ENCODE measurements at regions of chr11 and their contacts with region 1.

Region 1: GRCh38 chr11:93921695-93922468 is 71.5 kb upstream of the VSTM5 start:
- DNase-seq: peak; percentile 68
- H3K4me3 ChIP-seq: no peak overlapping the region
- H3K27ac ChIP-seq: no peak overlapping the region
- H3K4me1 ChIP-seq: peaks cover 7% of the 10 kb centered on the region
- H3K27me3 ChIP-seq: no peaks in the 10 kb centered on the region
- CTCF ChIP-seq: peak; percentile 89 to 96

Region 2: DNA sequence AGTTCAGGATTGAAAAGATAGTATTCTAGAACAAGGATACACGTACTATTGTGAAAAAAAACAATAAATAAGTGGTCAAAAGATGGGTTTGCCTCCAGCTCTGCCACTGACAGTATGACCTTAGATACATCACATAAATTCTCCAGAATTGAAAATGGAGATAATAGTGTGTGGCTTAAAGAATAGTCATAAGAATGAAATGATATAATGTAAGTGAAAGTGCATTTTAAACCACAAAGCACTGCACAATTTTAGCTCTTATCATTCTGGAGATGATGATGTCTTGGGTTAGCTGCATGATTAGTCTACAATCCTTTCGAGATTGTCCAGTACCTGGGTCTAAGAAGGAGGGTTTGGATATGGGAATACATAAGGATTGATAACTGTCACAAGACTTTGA is 282.3 kb before region 1 on chr11:
- CTCF ChIA-PET with region 1: no interaction called
- dilution Hi-C with region 1: no loop called
- in situ Hi-C with region 1: no loop called
- intact Hi-C with region 1: no loop called
- DNase-seq: no peak
- H3K4me3 ChIP-seq: no peak overlapping the region
- H3K27ac ChIP-seq: no peak overlapping the region
- H3K4me1 ChIP-seq: no peaks in the 10 kb centered on the region
- H3K27me3 ChIP-seq: peaks cover 1% of the 10 kb centered on the region
- CTCF ChIP-seq: no peak

Region 3: DNA sequence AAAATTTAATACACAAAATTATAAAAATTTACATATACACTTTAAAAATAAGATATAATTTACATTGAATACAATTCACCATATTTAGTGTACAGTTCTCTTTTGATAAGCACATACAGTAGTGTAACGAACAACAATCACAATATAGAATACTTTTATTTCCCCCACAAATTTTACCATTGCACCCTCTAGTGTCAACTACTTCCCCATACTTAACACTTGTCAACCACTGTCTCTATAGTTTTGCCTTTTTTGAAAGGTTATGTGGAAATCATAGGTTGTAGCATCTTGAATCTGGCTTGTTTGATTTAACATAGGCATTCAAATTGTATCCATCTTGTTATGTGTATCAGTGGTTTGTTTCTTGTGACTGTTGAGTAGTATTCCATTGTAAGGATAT is 185.5 kb after region 1 on chr11:
- CTCF ChIA-PET with region 1: interaction called, 8 read pairs
- dilution Hi-C with region 1: no loop called
- in situ Hi-C with region 1: no loop called
- intact Hi-C with region 1: loop called (anchors 1 kb)
- DNase-seq: no peak
- H3K4me3 ChIP-seq: no peak overlapping the region
- H3K27ac ChIP-seq: no peak overlapping the region
- H3K4me1 ChIP-seq: peaks cover 14% of the 10 kb centered on the region
- H3K27me3 ChIP-seq: no peaks in the 10 kb centered on the region
- CTCF ChIP-seq: peak in 1 of 2 donors; percentile 51

Region 4: DNA sequence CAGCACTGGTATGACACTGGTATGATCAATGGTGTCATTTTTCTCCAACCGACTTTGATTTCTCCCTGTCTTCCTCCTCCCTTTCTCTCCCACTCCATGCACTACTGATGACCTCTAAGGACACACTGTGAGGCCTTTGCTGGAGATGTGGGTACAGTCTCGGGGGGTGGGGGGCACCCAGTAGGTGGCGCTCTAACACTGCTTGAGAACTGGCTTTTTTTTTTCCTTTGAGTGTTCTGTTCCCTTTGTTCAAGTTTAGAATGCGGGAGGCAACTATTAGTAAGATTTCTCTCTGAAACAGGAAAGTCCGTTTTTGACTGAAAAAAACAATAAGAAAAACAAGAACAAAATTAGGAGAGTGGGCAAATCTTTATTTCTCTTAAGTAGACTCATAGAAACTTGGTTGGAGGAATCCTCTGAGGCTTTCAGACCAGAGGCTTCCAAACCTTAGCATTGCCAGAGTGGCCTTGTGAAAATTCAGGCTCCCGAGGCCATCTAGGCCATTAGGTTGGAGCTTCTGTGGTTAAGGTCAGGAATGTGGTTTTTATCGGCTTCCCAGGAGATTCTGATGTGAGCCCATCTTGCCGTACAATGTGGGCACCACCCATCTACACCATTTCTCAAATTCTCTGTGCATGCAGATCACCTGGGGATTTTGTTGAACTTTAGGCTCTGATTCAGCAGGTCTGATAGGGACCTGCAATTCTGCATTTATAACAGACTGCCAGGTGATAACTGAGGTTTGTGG is 250.0 kb after region 1 on chr11:
- CTCF ChIA-PET with region 1: no interaction called
- dilution Hi-C with region 1: no loop called
- in situ Hi-C with region 1: loop called in 1 of 2 experiments (anchors 10 kb)
- intact Hi-C with region 1: no loop called
- DNase-seq: peak; percentile 10
- H3K4me3 ChIP-seq: no peak overlapping the region
- H3K27ac ChIP-seq: no peak overlapping the region
- H3K4me1 ChIP-seq: peaks cover 8% of the 10 kb centered on the region
- H3K27me3 ChIP-seq: no peaks in the 10 kb centered on the region
- CTCF ChIP-seq: peak; percentile 67 to 73

Region 5: GRCh38 chr11:94417386-94417987 is 495.6 kb after region 1 on chr11:
- CTCF ChIA-PET with region 1: interaction called, 6 read pairs
- dilution Hi-C with region 1: no loop called
- in situ Hi-C with region 1: no loop called
- intact Hi-C with region 1: loop called (anchors 10 kb)
- DNase-seq: peak; percentile 16
- H3K4me3 ChIP-seq: no peak overlapping the region
- H3K27ac ChIP-seq: no peak overlapping the region
- H3K4me1 ChIP-seq: no peaks in the 10 kb centered on the region
- H3K27me3 ChIP-seq: no peaks in the 10 kb centered on the region
- CTCF ChIP-seq: peak; percentile 47 to 71

Measured in mammary epithelial cell (primary cell).